GM10248 (cell line): ENCODE measurements at regions of chr10 and their contacts with region 1.

Region 1: DNA sequence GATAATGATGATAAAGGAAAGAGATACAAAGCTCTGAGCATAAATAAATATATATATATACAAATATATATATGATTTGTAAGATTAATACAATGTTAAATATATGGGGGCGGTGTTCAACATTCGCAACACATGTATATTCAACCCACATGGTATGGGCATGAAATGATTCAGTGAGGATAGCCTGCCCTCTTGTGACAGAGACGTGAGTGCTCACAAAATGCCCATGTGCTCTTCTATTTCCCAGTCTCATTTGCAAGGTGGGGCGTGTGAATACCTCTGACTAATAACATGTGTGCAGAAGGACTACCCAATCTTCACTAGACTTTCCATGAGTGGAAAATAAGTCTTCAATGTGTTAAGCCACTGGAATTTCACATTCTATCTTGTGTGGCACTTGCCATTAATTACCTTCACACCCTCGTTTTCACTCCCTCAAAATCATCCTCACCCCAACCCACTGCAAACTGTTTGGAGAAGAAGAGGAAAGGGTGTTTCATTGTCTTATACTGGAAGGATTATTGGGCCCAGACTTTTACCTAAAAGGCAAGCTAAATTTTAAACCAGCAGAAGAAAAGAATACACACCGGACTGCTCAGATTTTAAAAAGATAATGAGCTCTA is 26.9 kb downstream of the ASAH2 start:
- DNase-seq: peak; percentile 43
- CTCF ChIP-seq: peak; percentile 72

Region 2: DNA sequence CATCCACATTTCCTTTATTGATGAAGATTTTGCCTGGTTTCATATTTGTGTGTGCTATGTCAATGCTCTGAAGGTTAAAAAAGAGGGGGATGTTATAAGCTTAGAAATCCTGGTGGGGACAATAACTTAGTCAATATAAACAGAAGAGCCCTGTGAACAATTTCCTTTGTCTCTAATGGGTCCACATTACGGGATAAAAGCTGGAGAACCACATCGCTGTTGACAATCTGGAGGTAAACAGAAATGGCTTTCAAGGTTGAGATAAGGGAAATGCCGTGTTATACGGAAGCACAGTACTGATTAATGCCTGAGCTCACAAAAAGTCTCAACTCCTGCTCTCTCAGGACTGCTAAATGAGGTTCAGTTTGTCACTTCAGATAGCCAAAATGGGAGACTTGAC is 10.0 kb after region 1 on chr10:
- CTCF ChIA-PET with region 1: interaction called, 23 read pairs
- POLR2A ChIA-PET with region 1: no interaction called
- DNase-seq: no peak
- CTCF ChIP-seq: no peak

Region 3: GRCh38 chr10:50260791-50261281 is 36.4 kb after region 1 on chr10:
- CTCF ChIA-PET with region 1: interaction called, 13 read pairs
- POLR2A ChIA-PET with region 1: no interaction called
- DNase-seq: peak; percentile 77
- CTCF ChIP-seq: no peak

Region 4: GRCh38 chr10:50396491-50397311 is 172.3 kb after region 1 on chr10:
- CTCF ChIA-PET with region 1: no interaction called
- POLR2A ChIA-PET with region 1: no interaction called
- DNase-seq: peak; percentile 42
- CTCF ChIP-seq: no peak